Activated CD8-positive, alpha-beta T cell treated with anti-CD3 and anti-CD28 coated beads for 36 hours (primary cell): ENCODE measurements at regions of chr2 and their contacts with region 1.

Region 1: DNA sequence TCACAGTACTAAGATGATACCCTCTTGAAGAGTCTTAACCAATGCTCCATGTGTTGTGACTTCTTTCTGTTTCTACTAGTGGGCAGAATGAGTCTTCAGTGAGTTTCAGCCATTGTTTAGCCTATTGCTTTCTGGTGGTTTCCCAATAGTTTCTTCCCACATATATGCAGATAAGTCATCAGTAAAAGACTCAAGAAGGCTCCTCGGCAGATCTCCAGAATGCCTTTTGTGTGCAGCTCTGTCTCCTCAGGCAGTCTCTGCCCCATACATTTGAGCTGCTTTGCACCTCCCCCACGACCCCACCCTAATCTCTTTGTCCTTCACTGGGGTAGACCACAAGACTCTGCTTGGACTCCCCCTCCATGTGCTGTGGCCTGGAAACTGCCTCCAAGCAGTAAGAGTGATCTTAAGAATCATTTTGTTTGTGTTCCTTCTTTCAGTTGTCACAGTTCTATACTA is 71.6 kb upstream of the CHRNA1 start:
- DNase-seq: peak; percentile 81
- ATAC-seq: peak; percentile 90
- H3K4me3 Mint-ChIP-seq: peak overlapping the region; percentile 39
- H3K27ac Mint-ChIP-seq: peak overlapping the region; percentile 95
- H3K4me1 Mint-ChIP-seq: peaks cover 49% of the 10 kb centered on the region
- H3K27me3 Mint-ChIP-seq: no peaks in the 10 kb centered on the region
- CTCF ChIP-seq: no peak

Region 2: DNA sequence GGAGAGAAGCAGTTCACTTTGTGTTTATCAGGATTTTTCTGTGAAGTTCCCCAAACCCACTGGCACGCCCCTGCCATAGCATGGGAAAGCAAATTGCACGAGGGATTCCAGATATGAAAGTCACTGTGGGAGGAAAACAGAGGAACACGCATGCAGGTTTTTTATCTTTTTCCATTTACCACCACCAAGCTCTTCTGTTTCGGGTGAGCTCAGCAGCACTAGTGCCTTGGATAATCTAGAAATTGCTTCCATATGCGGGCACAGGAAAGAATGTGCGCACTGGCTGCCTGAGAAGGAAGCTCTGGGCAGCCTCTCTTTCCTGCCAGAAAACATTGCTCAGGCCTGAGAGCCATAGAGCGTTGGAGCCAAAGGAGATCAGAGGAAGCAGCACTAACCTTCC is 172.3 kb before region 1 on chr2:
- CTCF ChIA-PET with region 1: no interaction called
- POLR2A ChIA-PET with region 1: no interaction called
- intact Hi-C with region 1: no loop called
- DNase-seq: no peak
- ATAC-seq: no peak
- H3K4me3 Mint-ChIP-seq: no peak overlapping the region
- H3K27ac Mint-ChIP-seq: no peak overlapping the region
- H3K4me1 Mint-ChIP-seq: peaks cover 44% of the 10 kb centered on the region
- H3K27me3 Mint-ChIP-seq: no peaks in the 10 kb centered on the region
- CTCF ChIP-seq: no peak

Region 3: DNA sequence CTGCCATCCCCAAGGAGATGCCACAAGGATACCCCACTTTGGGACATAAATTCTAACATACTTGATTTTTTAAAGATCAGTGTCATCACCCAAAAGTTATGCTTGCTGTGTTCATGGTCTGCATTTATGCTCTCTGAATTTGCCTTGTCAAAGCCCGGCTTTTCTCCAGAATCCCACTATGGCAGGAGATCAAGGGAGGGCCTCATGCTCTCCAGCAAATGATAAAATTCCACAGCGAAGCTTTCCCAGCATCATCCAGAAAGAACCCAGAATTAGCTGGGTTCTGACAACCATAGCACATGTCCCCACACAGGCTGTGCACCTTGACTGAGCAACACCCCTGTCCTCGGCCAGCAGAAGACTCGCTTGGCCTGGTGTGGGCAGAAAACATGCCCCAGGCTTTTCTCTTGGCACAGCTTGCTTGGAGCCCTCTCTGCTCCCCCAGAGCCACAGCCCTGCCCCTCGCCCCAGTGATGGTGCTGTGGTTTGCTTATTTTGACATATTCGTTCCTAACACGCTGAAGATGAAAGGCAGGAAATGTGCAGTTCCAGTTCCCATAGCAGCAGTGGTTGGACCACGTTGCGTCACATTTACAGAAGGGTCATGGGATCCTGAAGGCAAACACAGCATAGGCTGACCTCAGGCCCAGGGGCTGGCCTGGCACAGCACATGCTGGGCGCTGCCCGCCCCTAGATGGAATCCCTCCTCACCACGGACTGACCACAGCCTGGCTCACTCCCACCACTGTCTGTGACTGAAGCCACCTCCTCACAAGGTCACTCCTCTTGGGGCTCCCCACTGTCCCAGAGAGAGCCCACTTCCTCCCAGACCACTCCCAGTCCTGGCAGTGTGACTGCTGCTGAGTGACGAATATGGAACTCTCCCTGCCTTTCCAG is 57.5 kb before region 1 on chr2:
- CTCF ChIA-PET with region 1: no interaction called
- POLR2A ChIA-PET with region 1: no interaction called
- intact Hi-C with region 1: loop called (anchors 5 kb)
- DNase-seq: peak; percentile 94
- ATAC-seq: peak; percentile 93
- H3K4me3 Mint-ChIP-seq: peak overlapping the region; percentile 4
- H3K27ac Mint-ChIP-seq: peak overlapping the region; percentile 88
- H3K4me1 Mint-ChIP-seq: peaks cover 49% of the 10 kb centered on the region
- H3K27me3 Mint-ChIP-seq: no peaks in the 10 kb centered on the region
- CTCF ChIP-seq: no peak

Region 4: GRCh38 chr2:174794851-174795374 is 40.9 kb before region 1 on chr2:
- CTCF ChIA-PET with region 1: no interaction called
- POLR2A ChIA-PET with region 1: no interaction called
- intact Hi-C with region 1: loop called (anchors 5 kb)
- DNase-seq: peak; percentile 41
- ATAC-seq: peak; percentile 60
- H3K4me3 Mint-ChIP-seq: no peak overlapping the region
- H3K27ac Mint-ChIP-seq: peak overlapping the region; percentile 34
- H3K4me1 Mint-ChIP-seq: peaks cover 22% of the 10 kb centered on the region
- H3K27me3 Mint-ChIP-seq: peaks cover 2% of the 10 kb centered on the region
- CTCF ChIP-seq: no peak

Region 5: GRCh38 chr2:174888646-174889271 is 52.9 kb after region 1 on chr2:
- CTCF ChIA-PET with region 1: no interaction called
- POLR2A ChIA-PET with region 1: no interaction called
- intact Hi-C with region 1: no loop called
- DNase-seq: no peak
- ATAC-seq: no peak
- H3K4me3 Mint-ChIP-seq: no peak overlapping the region
- H3K27ac Mint-ChIP-seq: no peak overlapping the region
- H3K4me1 Mint-ChIP-seq: peaks cover 4% of the 10 kb centered on the region
- H3K27me3 Mint-ChIP-seq: no peaks in the 10 kb centered on the region
- CTCF ChIP-seq: no peak